A549 (cell line): ENCODE measurements at regions of chr2 and their contacts with region 1.

Region 1: GRCh38 chr2:120109186-120110061 is 96.5 kb downstream of the EPB41L5 start:
- DNase-seq: peak; percentile 33 to 54
- ATAC-seq: peak; percentile 66 to 83; a peak in 5 of 6 replicates
- H3K4me3 ChIP-seq: no peak overlapping the region
- H3K27ac ChIP-seq: peak overlapping the region in 1 of 2 experiments; percentile 22; a peak in 1 of 6 replicates
- H3K4me1 ChIP-seq: peaks cover 18% of the 10 kb centered on the region; the same call in 2 of the 3 replicates
- CTCF ChIP-seq: peak; percentile 81
- EP300 ChIP-seq: no peak
- POLR2A ChIP-seq: no peak
- RAD21 ChIP-seq: peak; percentile 78 to 84

Region 2: GRCh38 chr2:119721462-119721861 is 388.0 kb before region 1 on chr2:
- CTCF ChIA-PET with region 1: no interaction called
- POLR2A ChIA-PET with region 1: no interaction called
- DNase-seq: no peak
- ATAC-seq: no peak
- H3K4me3 ChIP-seq: no peak overlapping the region
- H3K27ac ChIP-seq: no peak overlapping the region
- H3K4me1 ChIP-seq: no peaks in the 10 kb centered on the region
- CTCF ChIP-seq: no peak
- EP300 ChIP-seq: no peak
- POLR2A ChIP-seq: no peak
- RAD21 ChIP-seq: no peak

Region 3: GRCh38 chr2:120169020-120169419 is 59.6 kb after region 1 on chr2:
- CTCF ChIA-PET with region 1: interaction called, 36 read pairs
- POLR2A ChIA-PET with region 1: no interaction called
- DNase-seq: no peak
- ATAC-seq: no peak
- H3K4me3 ChIP-seq: no peak overlapping the region
- H3K27ac ChIP-seq: no peak overlapping the region
- H3K4me1 ChIP-seq: no peaks in the 10 kb centered on the region
- CTCF ChIP-seq: no peak
- EP300 ChIP-seq: no peak
- POLR2A ChIP-seq: no peak
- RAD21 ChIP-seq: no peak